CD8-positive, alpha-beta memory T cell (primary cell): ENCODE measurements at regions of chr3 and their contacts with region 1.

Region 1: DNA sequence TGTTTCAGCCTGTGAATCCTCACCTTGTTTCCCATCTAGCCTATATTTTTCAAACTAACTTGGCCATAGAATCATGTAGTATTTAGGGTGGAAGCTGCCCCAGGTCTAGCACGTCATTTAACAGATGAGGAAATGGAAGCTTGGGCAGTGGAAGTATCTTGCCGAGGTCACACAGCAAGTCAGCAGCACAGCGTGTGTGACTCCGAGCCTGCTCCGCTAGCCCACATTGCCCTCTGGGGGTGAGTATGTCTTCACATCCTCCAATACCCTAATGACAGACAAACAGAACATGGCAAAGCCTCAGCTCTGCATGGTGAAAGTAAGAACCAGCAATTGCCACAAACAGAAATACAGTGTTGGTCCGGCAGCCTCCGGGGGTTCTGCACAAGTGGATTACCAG is 2.2 kb upstream of the CCR5 start:
- DNase-seq: peak; percentile 37 to 87 (median 61)
- H3K4me3 ChIP-seq: no peak overlapping the region
- H3K4me3 Mint-ChIP-seq: peak overlapping the region; percentile 63 to 91 (median 71)
- H3K27ac ChIP-seq: peak overlapping the region; percentile 22
- H3K27ac Mint-ChIP-seq: peak overlapping the region; percentile 89 to 98 (median 96)
- H3K4me1 ChIP-seq: peaks cover 48% of the 10 kb centered on the region
- H3K4me1 Mint-ChIP-seq: peaks cover 64 to 91% (median 85%) of the 10 kb centered on the region in 3 donors
- H3K27me3 ChIP-seq: no peaks in the 10 kb centered on the region
- H3K27me3 Mint-ChIP-seq: peaks cover 0 to 2% of the 10 kb centered on the region in 2 donors

Region 2: GRCh38 chr3:46078712-46079400 is 289.7 kb before region 1 on chr3:
- CTCF ChIA-PET with region 1: interaction called, 58 read pairs
- POLR2A ChIA-PET with region 1: no interaction called
- DNase-seq: peak; percentile 82 to 92 (median 85)
- H3K4me3 ChIP-seq: no peak overlapping the region
- H3K4me3 Mint-ChIP-seq: peak overlapping the region in 5 of 7 donors; percentile 1 to 71 (median 52)
- H3K27ac ChIP-seq: no peak overlapping the region
- H3K27ac Mint-ChIP-seq: peak overlapping the region in 7 of 8 donors; percentile 3 to 87 (median 44)
- H3K4me1 ChIP-seq: peaks cover 12% of the 10 kb centered on the region
- H3K4me1 Mint-ChIP-seq: peaks cover 22 to 43% (median 22%) of the 10 kb centered on the region in 3 donors
- H3K27me3 ChIP-seq: no peaks in the 10 kb centered on the region
- H3K27me3 Mint-ChIP-seq: no peaks in the 10 kb centered on the region

Region 3: DNA sequence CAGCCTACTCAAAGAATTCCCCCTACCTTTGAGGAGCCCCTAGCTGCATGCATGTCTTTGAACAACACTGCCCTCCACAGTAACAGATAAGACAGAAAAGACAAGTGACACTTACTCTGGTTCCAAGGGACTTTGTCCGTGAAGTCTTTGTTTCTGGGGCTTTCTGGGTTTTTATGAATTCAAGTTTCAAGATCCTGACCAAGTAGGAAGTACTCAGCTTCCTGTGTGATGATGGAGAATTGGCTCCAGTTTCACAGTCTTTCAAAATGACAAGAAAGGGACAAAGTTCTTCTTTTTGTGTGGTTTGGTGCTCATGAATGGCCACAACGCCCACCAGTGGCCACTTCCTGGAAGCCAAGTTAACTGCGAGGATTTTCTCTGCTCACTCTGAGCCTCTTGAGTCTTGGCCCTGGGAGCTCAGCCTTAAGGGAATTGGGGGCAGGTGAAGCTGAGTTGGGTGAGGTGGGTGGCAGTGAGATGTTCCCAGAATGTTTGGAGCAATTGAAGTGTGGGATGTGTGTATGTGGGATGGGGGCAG is 160.3 kb before region 1 on chr3 and contains the start of gene CCR1:
- CTCF ChIA-PET with region 1: interaction called, 32 read pairs
- POLR2A ChIA-PET with region 1: interaction called, 5 read pairs
- DNase-seq: peak in 4 of 5 donors; percentile 6 to 61 (median 36)
- H3K4me3 ChIP-seq: no peak within 1 kb of the TSS
- H3K4me3 Mint-ChIP-seq: peak within 1 kb of the TSS; percentile 55 to 94 (median 88)
- H3K27ac ChIP-seq: no peak within 1 kb of the TSS
- H3K27ac Mint-ChIP-seq: peak within 1 kb of the TSS; percentile 75 to 97 (median 87)
- H3K4me1 ChIP-seq: peaks cover 30% of the 10 kb centered on the region
- H3K4me1 Mint-ChIP-seq: peaks cover 42 to 62% (median 54%) of the 10 kb centered on the region in 3 donors
- H3K27me3 ChIP-seq: no peaks in the 10 kb centered on the region
- H3K27me3 Mint-ChIP-seq: no peaks in the 10 kb centered on the region
- total RNA-seq, gene CCR1: 1.5 to 1.8 TPM

Region 4: GRCh38 chr3:46276502-46277099 is 92.0 kb before region 1 on chr3:
- CTCF ChIA-PET with region 1: interaction called, 156 read pairs
- POLR2A ChIA-PET with region 1: interaction called, 14 read pairs
- DNase-seq: peak; percentile 54 to 87 (median 67)
- H3K4me3 ChIP-seq: no peak overlapping the region
- H3K4me3 Mint-ChIP-seq: peak overlapping the region in 6 of 7 donors; percentile 1 to 74 (median 60)
- H3K27ac ChIP-seq: no peak overlapping the region
- H3K27ac Mint-ChIP-seq: peak overlapping the region; percentile 16 to 91 (median 76)
- H3K4me1 ChIP-seq: peaks cover 39% of the 10 kb centered on the region
- H3K4me1 Mint-ChIP-seq: peaks cover 40 to 49% (median 48%) of the 10 kb centered on the region in 3 donors
- H3K27me3 ChIP-seq: no peaks in the 10 kb centered on the region
- H3K27me3 Mint-ChIP-seq: peaks cover 0 to 1% of the 10 kb centered on the region in 2 donors

Region 5: DNA sequence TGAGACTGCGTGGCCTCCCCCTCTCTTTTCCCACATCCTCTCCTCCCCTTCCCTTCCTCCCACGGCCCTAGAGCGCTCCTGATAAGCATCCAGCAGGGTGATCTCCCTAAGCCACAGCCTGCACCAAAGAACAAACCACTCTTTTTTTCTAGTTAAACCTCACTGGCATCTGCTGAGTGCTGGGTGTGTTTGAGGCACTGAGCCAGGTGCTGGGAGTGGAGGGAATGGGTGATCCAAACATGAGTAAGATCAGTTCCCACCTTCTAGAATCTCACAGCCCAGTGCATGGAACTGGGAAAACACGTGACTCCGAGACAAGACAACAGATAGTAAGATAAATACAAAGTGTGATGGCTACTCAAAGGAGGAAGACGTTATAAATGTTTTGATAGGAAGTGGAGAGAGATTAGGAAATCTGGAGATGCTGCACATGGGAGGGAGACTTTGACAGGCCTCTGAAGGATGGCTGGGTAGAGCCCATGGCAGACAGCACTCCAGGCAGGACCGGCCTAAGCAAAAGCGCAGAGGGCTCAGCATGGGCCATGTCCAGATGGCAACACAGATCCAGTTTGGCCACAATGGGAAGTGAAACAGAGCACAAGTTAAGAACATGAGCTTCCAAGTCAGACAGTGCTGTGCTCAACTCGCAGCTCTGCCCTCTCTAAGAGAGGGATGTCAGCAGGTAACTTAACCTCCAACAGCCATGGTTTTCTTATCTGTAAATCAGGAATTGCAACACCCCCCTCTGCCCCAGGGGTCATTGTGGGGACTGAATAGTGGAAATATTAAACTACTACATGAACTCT is 70.7 kb before region 1 on chr3:
- CTCF ChIA-PET with region 1: interaction called, 32 read pairs
- POLR2A ChIA-PET with region 1: interaction called, 4 read pairs
- DNase-seq: no peak
- H3K4me3 ChIP-seq: no peak overlapping the region
- H3K4me3 Mint-ChIP-seq: peak overlapping the region in 6 of 7 donors; percentile 2 to 58 (median 32)
- H3K27ac ChIP-seq: no peak overlapping the region
- H3K27ac Mint-ChIP-seq: peak overlapping the region; percentile 79 to 97 (median 90)
- H3K4me1 ChIP-seq: peaks cover 79% of the 10 kb centered on the region
- H3K4me1 Mint-ChIP-seq: peaks cover 90 to 97% (median 93%) of the 10 kb centered on the region in 3 donors
- H3K27me3 ChIP-seq: no peaks in the 10 kb centered on the region
- H3K27me3 Mint-ChIP-seq: no peaks in the 10 kb centered on the region

Region 6: DNA sequence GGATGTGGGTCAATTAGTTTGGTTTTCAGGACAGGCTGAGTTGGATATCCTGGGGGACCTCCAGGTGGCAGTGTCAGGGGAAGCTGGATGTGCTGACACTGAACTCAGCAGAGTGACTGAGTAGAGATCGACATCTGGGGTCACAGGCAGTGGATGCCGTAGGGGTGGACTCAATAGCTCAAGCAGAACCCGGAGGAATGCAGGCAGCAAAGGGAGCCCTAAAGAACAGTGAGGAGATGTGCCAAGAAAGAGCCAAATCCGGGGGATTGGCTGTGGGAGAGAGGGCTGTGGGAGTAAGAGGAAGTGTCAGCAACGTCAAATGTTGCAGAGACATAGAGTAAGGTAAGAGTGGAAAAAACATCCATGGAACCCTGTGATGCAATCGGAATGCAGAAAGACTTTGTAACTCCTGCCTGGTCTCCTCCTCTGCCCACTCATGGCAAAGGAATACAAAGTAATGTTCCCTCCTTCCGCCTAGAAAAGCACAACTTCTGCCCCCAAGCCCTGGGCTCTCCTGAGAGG is 26.7 kb after region 1 on chr3:
- CTCF ChIA-PET with region 1: no interaction called
- POLR2A ChIA-PET with region 1: no interaction called
- DNase-seq: no peak
- H3K4me3 ChIP-seq: no peak overlapping the region
- H3K4me3 Mint-ChIP-seq: no peak overlapping the region
- H3K27ac ChIP-seq: no peak overlapping the region
- H3K27ac Mint-ChIP-seq: peak overlapping the region in 2 of 8 donors; percentile 33 to 47
- H3K4me1 ChIP-seq: no peaks in the 10 kb centered on the region
- H3K4me1 Mint-ChIP-seq: peaks cover 0 to 2% (median 2%) of the 10 kb centered on the region in 3 donors
- H3K27me3 ChIP-seq: no peaks in the 10 kb centered on the region
- H3K27me3 Mint-ChIP-seq: peaks cover 0 to 2% of the 10 kb centered on the region in 2 donors

Region 7: GRCh38 chr3:46558184-46559043 is 189.8 kb after region 1 on chr3:
- CTCF ChIA-PET with region 1: interaction called, 16 read pairs
- POLR2A ChIA-PET with region 1: no interaction called
- DNase-seq: peak; percentile 35 to 88 (median 68)
- H3K4me3 ChIP-seq: peak overlapping the region; percentile 56
- H3K4me3 Mint-ChIP-seq: peak overlapping the region; percentile 11 to 83 (median 71)
- H3K27ac ChIP-seq: no peak overlapping the region
- H3K27ac Mint-ChIP-seq: peak overlapping the region in 5 of 8 donors; percentile 21 to 54 (median 47)
- H3K4me1 ChIP-seq: peaks cover 11% of the 10 kb centered on the region
- H3K4me1 Mint-ChIP-seq: peaks cover 9 to 24% (median 24%) of the 10 kb centered on the region in 3 donors
- H3K27me3 ChIP-seq: no peaks in the 10 kb centered on the region
- H3K27me3 Mint-ChIP-seq: peaks cover 3 to 6% of the 10 kb centered on the region in 2 donors